ENCODE measurements at regions of chr10 and their contacts with region 1.

Region 1: GRCh38 chr10:86521678-86522509 is at the start of gene WAPL:
- DNase-seq: peak; percentile 87 to 97
- H3K4me3 ChIP-seq: peak within 1 kb of the TSS; percentile 92 to 93
- H3K27ac ChIP-seq: peak within 1 kb of the TSS; percentile 96 to 97
- H3K4me1 ChIP-seq: peaks cover 5 to 30% of the 10 kb centered on the region in 2 donors
- H3K27me3 ChIP-seq: no peaks in the 10 kb centered on the region
- CTCF ChIP-seq: no peak
- total RNA-seq, gene WAPL: 14.7 TPM

Region 2: DNA sequence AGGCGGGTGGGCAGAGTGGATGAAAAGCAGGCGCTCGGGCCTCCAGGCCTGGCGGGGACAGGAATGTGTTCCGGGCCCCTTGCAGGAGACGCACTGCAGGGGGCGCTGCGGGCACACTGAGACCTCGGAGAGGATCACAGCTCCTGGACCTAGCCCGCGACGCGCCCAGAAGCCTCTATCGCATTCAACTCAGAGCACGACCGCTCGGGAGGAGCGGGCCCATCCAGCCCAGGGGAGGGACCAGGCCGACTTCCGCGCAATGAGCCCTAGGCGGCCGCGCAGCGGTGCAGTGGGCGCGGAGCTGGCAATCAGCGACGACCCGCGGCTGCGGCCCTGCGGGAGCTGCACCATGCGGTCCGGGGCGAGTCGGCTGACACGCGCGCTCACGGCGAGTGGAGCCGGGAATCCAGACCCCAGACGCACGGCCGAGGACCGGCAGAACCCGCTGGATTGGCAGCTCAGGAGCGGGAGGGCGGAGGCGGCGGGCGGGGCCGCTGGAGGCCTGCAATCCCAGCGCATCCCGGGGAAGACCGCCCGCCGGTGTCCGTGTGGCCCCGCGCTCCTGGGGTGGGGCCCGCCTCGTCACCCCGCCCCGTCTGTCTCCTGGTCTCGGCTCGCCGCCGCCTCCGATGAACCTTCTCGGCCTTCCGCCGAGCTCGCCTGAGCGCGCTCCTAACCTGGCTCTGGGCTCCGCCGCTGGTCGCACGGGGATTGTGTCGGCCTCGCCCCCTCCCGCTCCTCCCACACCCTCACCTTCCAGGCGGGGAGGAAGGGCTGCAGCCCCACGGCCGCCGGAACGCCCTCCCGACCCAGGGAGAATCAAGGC is 121.8 kb before region 1 on chr10:
- intact Hi-C with region 1: loop called (anchors 1 kb)
- DNase-seq: peak; percentile 68 to 97
- H3K4me3 ChIP-seq: peak overlapping the region; percentile 75 to 92
- H3K27ac ChIP-seq: peak overlapping the region; percentile 90 to 96
- H3K4me1 ChIP-seq: peaks cover 10 to 16% of the 10 kb centered on the region in 2 donors
- H3K27me3 ChIP-seq: no peaks in the 10 kb centered on the region
- CTCF ChIP-seq: peak; percentile 94 to 98 (median 97)

Region 3: DNA sequence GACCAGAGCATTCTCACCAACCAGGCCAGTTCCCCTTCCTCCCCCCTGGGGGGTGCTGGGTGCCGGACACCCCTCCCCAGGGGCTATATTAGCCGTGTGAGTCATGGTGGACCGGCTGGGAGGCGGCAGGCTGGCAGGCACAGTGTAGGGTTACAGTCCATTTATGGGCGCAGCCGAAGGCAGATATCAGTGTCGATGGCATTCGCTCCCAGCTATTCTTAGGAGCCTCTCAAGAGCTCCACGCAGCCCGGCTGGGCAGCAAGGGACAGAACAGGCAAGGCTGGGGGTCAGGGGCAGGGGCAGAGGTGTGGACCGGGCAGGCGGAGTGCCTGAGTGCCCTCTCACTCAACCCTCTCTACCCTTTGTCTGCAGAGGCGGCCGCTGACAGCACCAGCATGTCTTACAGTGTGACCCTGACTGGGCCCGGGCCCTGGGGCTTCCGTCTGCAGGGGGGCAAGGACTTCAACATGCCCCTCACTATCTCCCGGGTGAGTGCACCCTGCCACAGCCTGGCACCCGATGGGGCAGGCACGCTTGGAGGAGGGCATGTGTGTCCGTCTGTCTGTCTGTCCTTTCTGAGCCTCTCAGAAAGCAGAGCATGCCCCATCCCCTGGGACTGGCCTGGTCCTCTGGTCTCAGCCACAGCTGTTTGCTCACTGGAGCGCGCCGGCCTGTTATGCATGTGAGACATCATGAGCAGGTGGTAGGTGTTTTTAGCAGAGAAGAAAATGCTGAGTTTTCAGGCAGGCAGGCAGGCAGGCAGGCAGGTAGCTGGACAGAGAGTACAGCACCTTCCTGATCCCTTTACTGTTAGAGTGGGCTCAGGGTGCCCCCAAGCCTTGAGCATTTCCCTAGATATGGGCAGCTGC is 146.6 kb after region 1 on chr10 and contains the start of gene LDB3:
- intact Hi-C with region 1: loop called (anchors 1 kb)
- DNase-seq: peak; percentile 65 to 93
- H3K4me3 ChIP-seq: peak within 1 kb of the TSS; percentile 46 to 74
- H3K27ac ChIP-seq: peak within 1 kb of the TSS; percentile 92
- H3K4me1 ChIP-seq: peaks cover 14 to 48% of the 10 kb centered on the region in 2 donors
- H3K27me3 ChIP-seq: no peaks in the 10 kb centered on the region
- CTCF ChIP-seq: no peak
- total RNA-seq, gene LDB3: 27.4 TPM

Region 4: DNA sequence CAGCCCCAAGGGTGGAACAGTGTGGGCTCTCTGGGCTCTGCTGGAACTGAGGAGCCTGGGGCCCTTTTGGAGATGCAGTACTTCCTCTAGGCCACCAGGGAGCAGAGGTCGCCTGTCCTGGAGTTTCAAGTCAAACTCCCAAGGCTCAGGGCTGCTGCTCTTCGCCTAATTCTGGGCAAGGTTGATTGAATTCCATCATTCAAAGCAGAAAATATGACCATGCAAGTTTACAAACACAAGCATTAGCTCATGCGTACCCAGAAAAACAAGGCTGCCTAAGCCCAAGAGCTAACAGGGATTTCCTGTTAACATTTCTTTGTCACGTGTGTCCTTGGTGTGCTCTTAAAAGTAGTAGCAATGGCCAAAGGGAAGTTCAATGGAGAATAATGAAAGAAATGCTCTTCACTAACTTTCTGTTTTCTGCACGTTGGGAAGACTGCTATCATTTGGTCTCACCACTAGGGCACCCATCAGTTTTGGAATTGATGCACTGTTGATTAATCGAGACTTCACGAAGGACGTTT is 166.6 kb after region 1 on chr10:
- intact Hi-C with region 1: loop called (anchors 5 kb)
- DNase-seq: peak in 1 of 2 donors; percentile 79
- H3K4me3 ChIP-seq: no peak overlapping the region
- H3K27ac ChIP-seq: peak overlapping the region in 1 of 2 donors; percentile 19
- H3K4me1 ChIP-seq: peaks cover 15 to 51% of the 10 kb centered on the region in 2 donors
- H3K27me3 ChIP-seq: no peaks in the 10 kb centered on the region
- CTCF ChIP-seq: peak; percentile 73 to 94 (median 85)

Region 5: GRCh38 chr10:86960003-86960862 is 438.3 kb after region 1 on chr10:
- intact Hi-C with region 1: loop called (anchors 10 kb)
- DNase-seq: peak in 1 of 2 donors; percentile 83
- H3K4me3 ChIP-seq: peak overlapping the region in 1 of 2 donors; percentile 42
- H3K27ac ChIP-seq: peak overlapping the region; percentile 95 to 98
- H3K4me1 ChIP-seq: peaks cover 40 to 59% of the 10 kb centered on the region in 2 donors
- H3K27me3 ChIP-seq: no peaks in the 10 kb centered on the region
- CTCF ChIP-seq: peak; percentile 91 to 97 (median 97)

Region 6: DNA sequence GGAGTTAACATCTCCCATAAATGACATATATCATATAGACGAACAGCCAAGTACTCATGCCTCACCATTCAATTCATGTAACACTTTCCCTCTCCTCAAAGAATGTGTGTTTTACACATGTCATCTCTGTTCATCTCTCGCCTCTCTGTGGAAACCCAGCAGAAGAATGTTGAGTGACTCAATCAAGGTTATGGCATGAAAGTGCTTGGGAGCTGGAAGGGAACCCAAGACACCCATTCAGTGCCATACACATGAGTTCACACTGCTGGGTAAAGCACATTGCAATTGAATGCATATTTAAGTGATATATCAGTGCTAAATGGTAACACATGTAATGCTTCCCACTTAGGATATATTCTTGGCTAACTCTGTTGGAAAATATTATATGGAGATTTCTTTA is 1664.4 kb after region 1 on chr10:
- intact Hi-C with region 1: no loop called
- DNase-seq: no peak
- H3K4me3 ChIP-seq: no peak overlapping the region
- H3K27ac ChIP-seq: no peak overlapping the region
- H3K4me1 ChIP-seq: no peaks in the 10 kb centered on the region
- H3K27me3 ChIP-seq: no peaks in the 10 kb centered on the region
- CTCF ChIP-seq: no peak

Measured in ascending aorta (tissue), 2 donors.